Endothelial cell of umbilical vein (primary cell): ENCODE measurements at regions of chr2 and their contacts with region 1.

Region 1: DNA sequence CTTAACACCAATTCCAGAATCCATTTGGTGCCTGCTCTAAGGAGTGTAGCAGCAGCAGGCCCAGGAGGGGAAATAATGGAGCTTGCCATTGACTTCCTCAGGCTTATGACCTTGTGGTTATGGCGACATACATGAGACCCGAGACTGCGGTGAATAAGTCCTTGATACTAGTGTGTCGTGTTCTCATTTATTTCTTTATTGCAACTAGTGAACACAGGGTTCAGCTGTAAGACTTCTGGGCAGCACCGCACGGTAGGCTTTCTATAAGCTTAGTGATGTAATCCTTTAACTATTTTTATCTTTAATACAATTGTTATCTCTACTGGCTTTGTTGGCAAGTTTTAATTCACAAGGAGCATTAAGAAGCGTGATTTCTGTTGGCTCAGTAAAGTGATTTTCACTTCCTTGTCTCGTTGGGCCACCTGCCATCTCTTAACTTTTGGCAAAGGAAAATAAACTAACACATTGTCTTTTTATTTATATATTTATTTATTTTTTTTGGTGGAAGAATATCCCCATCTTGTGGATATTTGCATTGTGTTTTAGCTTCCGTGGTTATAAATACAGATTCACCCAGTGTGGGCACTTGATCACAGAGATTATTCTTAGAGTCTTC is 139.8 kb downstream of the LTBP1 start:
- DNase-seq: peak; percentile 83
- H3K4me3 ChIP-seq: no peak overlapping the region
- H3K27ac ChIP-seq: peak overlapping the region; percentile 83
- H3K4me1 ChIP-seq: peaks cover 21% of the 10 kb centered on the region
- H3K27me3 ChIP-seq: no peaks in the 10 kb centered on the region
- CTCF ChIP-seq: no peak
- POLR2A ChIP-seq: no peak

Region 2: DNA sequence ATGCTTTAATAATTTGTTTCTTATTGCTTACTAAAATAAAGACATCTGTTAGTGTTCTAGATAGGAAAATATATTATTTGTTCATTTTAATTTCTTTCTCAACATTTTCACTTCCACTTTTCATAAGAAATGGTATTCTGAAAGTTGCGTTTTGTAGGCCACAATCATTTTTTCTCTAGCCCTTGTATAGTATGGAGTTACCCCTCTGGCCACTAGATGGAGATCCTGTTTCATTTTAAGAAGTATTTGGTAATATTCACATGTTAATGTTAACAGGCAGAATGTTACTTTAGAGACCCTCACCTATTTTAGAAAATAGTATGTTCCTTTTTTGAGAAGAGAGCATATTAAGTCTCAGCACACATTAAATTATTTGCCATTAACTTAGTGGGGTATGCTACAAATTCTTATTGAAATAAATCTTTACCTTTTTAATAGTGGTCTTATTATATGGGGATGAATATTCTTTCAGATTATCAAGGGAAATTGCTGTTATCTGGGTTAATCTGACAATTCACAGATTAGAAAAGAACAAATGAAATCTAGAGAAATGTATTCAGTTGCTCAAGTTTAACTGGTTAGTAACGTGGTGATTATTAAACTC is 532.6 kb before region 1 on chr2:
- CTCF ChIA-PET with region 1: no interaction called
- POLR2A ChIA-PET with region 1: no interaction called
- dilution Hi-C with region 1: no loop called
- intact Hi-C with region 1: loop called (anchors 1 kb)
- DNase-seq: peak; percentile 63
- H3K4me3 ChIP-seq: no peak overlapping the region
- H3K27ac ChIP-seq: no peak overlapping the region
- H3K4me1 ChIP-seq: peaks cover 7% of the 10 kb centered on the region
- H3K27me3 ChIP-seq: no peaks in the 10 kb centered on the region
- CTCF ChIP-seq: peak; percentile 50
- POLR2A ChIP-seq: no peak

Region 3: GRCh38 chr2:32792416-32792815 is 294.1 kb before region 1 on chr2:
- CTCF ChIA-PET with region 1: interaction called, 5 read pairs
- POLR2A ChIA-PET with region 1: no interaction called
- dilution Hi-C with region 1: no loop called
- intact Hi-C with region 1: loop called (anchors 5 kb)
- DNase-seq: peak; percentile 95
- H3K4me3 ChIP-seq: no peak overlapping the region
- H3K27ac ChIP-seq: peak overlapping the region; percentile 9
- H3K4me1 ChIP-seq: peaks cover 23% of the 10 kb centered on the region
- H3K27me3 ChIP-seq: no peaks in the 10 kb centered on the region
- CTCF ChIP-seq: no peak
- POLR2A ChIP-seq: no peak

Region 4: GRCh38 chr2:32825291-32825712 is 261.2 kb before region 1 on chr2:
- CTCF ChIA-PET with region 1: no interaction called
- POLR2A ChIA-PET with region 1: no interaction called
- dilution Hi-C with region 1: no loop called
- intact Hi-C with region 1: no loop called
- DNase-seq: peak; percentile 91
- H3K4me3 ChIP-seq: no peak overlapping the region
- H3K27ac ChIP-seq: no peak overlapping the region
- H3K4me1 ChIP-seq: peaks cover 14% of the 10 kb centered on the region
- H3K27me3 ChIP-seq: no peaks in the 10 kb centered on the region
- CTCF ChIP-seq: no peak
- POLR2A ChIP-seq: no peak

Region 5: DNA sequence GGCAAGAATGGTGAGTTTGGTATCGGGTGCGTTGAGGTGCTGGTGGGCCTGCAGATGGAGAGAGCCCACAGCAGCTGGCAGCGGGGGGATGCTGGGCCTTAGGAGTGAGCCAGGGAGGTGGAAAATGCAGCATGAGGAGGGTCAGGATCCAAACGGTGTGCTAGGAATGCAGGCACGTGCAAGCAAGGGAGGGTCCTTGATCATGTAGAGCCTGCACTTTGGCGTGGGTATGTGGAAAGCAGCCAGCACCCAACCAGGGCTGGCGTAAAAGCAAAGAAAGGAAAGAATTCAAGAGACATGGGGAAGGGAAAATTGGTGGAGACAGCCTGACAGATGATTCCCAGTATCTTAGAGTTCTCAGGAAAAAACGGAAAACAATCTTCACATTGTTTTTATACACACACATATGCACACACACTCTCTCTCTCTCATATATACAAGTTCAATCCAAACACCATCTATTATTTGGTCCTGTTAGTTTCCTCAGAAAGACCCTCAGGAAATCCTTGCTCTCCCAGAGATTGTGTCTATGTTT is 93.4 kb before region 1 on chr2:
- CTCF ChIA-PET with region 1: no interaction called
- POLR2A ChIA-PET with region 1: no interaction called
- dilution Hi-C with region 1: no loop called
- intact Hi-C with region 1: no loop called
- DNase-seq: peak; percentile 57
- H3K4me3 ChIP-seq: no peak overlapping the region
- H3K27ac ChIP-seq: no peak overlapping the region
- H3K4me1 ChIP-seq: no peaks in the 10 kb centered on the region
- H3K27me3 ChIP-seq: no peaks in the 10 kb centered on the region
- CTCF ChIP-seq: no peak
- POLR2A ChIP-seq: no peak

Region 6: DNA sequence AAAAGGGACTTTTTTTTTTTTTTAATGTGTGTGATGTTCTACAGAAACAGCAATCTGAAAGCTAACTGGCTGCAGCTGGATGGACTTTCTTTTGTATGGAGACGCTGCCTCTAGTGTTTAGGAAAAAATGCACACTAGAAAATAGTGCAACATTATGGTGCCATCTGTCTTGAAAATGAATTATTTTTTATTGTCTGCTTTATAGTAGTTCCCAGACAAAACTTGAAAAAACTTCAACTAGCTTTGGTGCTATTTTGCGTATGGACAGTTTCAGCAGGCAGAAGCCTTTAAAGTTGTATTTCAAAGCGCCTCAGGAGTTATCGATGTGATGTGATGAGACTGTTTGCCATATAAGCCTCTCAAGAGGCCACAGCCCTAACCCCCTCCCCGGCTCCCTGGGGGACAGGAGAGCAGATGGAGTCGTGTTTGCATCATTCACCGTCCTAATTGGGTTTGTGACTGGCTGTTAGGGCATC is 52.9 kb before region 1 on chr2:
- CTCF ChIA-PET with region 1: interaction called, 27 read pairs
- POLR2A ChIA-PET with region 1: no interaction called
- dilution Hi-C with region 1: no loop called
- intact Hi-C with region 1: loop called (anchors 1 kb)
- DNase-seq: peak; percentile 67
- H3K4me3 ChIP-seq: no peak overlapping the region
- H3K27ac ChIP-seq: no peak overlapping the region
- H3K4me1 ChIP-seq: peaks cover 15% of the 10 kb centered on the region
- H3K27me3 ChIP-seq: no peaks in the 10 kb centered on the region
- CTCF ChIP-seq: peak; percentile 13 to 46
- POLR2A ChIP-seq: no peak

Region 7: GRCh38 chr2:33069894-33070651 is 16.4 kb before region 1 on chr2:
- CTCF ChIA-PET with region 1: interaction called, 13 read pairs
- POLR2A ChIA-PET with region 1: interaction called, 3 read pairs
- dilution Hi-C with region 1: no loop called
- intact Hi-C with region 1: no loop called
- DNase-seq: peak; percentile 98
- H3K4me3 ChIP-seq: no peak overlapping the region
- H3K27ac ChIP-seq: peak overlapping the region; percentile 98
- H3K4me1 ChIP-seq: peaks cover 60% of the 10 kb centered on the region
- H3K27me3 ChIP-seq: no peaks in the 10 kb centered on the region
- CTCF ChIP-seq: no peak
- POLR2A ChIP-seq: no peak

Region 8: DNA sequence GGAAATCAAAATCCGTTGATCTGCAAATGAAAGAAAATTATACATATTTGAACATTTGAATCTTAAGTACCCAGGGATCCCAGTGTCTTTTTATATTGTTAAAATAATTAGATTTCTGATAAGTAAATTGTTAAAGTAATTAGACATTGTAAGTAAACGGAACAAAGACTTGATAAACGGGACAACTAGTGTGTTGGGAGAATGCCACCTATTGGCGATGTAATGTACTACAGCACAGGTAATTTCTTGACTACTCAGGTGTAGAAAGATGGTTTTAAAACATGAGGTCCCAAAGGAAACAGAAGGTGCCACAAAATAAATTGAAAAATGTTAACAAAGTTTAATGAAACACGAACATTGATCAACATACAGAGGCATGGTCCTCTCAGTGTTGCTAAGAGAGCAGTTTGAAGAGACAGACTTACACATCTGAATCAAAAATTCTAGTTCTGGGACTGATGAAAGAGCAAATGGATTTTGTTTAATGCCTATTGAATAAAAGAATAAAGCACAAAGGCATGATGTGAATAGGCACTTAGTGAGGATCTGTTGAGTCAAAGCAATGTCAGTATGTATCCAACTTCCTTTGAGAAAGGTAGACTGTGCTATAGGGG is 286.5 kb after region 1 on chr2:
- CTCF ChIA-PET with region 1: interaction called, 13 read pairs
- POLR2A ChIA-PET with region 1: no interaction called
- dilution Hi-C with region 1: no loop called
- intact Hi-C with region 1: loop called (anchors 5 kb)
- DNase-seq: peak; percentile 81
- H3K4me3 ChIP-seq: no peak overlapping the region
- H3K27ac ChIP-seq: no peak overlapping the region
- H3K4me1 ChIP-seq: peaks cover 6% of the 10 kb centered on the region
- H3K27me3 ChIP-seq: no peaks in the 10 kb centered on the region
- CTCF ChIP-seq: peak; percentile 48 to 55
- POLR2A ChIP-seq: no peak

Region 9: GRCh38 chr2:33583194-33583938 is 496.9 kb after region 1 on chr2:
- CTCF ChIA-PET with region 1: interaction called, 14 read pairs
- POLR2A ChIA-PET with region 1: no interaction called
- dilution Hi-C with region 1: no loop called
- intact Hi-C with region 1: no loop called
- DNase-seq: peak; percentile 64
- H3K4me3 ChIP-seq: no peak overlapping the region
- H3K27ac ChIP-seq: no peak overlapping the region
- H3K4me1 ChIP-seq: peaks cover 3% of the 10 kb centered on the region
- H3K27me3 ChIP-seq: no peaks in the 10 kb centered on the region
- CTCF ChIP-seq: peak; percentile 63 to 66
- POLR2A ChIP-seq: no peak